AG04450 (cell line): ENCODE measurements at regions of chr5 and their contacts with region 1.

Region 1: GRCh38 chr5:138449501-138450239 is 10.8 kb downstream of the REEP2 start:
- DNase-seq: peak; percentile 59
- H3K4me3 ChIP-seq: peak overlapping the region; percentile 13; the same call in 1 of the 2 replicates
- H3K27ac ChIP-seq: no peak overlapping the region
- H3K27me3 ChIP-seq: no peaks in the 10 kb centered on the region
- CTCF ChIP-seq: peak; percentile 93

Region 2: DNA sequence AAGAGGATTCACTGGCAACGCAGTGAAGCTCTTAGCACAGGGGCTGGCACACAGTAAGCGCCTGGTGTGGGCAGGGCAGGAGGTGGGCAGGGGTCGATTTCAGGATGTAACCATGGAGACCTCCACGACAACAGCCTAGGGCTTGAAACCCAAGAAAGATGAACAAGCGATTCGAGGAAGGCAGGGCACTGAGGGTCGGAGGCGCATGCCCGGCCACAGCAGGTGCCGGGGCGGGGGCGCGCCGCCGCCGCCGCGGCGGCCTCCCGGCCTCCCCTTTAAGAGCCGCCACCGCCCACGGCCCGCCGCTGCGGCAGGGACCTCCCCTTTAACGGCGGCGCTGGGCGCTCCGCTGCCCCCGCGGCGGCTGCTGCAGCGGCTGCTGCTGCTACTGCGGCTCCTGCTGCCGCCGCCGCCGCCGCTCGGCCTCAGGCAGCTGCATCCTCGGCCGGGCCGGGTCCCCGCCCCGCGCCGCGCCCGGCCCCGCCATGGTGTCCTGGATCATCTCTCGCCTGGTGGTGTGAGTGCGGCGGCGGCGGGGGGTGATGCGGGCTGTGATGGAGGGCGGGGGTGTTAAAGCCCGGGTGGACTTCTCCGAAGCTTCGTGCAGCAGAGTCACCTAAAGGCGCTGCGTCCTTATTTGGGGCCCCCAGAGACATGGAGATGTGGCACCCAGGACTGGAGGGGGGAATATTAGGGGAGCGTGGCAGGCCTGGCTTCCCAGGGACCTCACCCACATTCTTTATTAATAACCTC is 10.8 kb before region 1 on chr5 and contains the start of gene REEP2:
- CTCF ChIA-PET with region 1: interaction called, 23 read pairs
- POLR2A ChIA-PET with region 1: interaction called, 3 read pairs
- DNase-seq: no peak
- H3K4me3 ChIP-seq: peak within 1 kb of the TSS; percentile 74
- H3K27ac ChIP-seq: no peak within 1 kb of the TSS
- H3K27me3 ChIP-seq: no peaks in the 10 kb centered on the region
- CTCF ChIP-seq: no peak
- polyA plus RNA-seq, gene REEP2: 24.7 and 36.9 TPM in 2 replicates

Region 3: GRCh38 chr5:138464008-138464387 is 14.3 kb after region 1 on chr5:
- CTCF ChIA-PET with region 1: interaction called, 28 read pairs
- POLR2A ChIA-PET with region 1: interaction called, 13 read pairs
- DNase-seq: peak; percentile 93
- H3K4me3 ChIP-seq: peak overlapping the region; percentile 94
- H3K27ac ChIP-seq: peak overlapping the region; percentile 96
- H3K27me3 ChIP-seq: no peaks in the 10 kb centered on the region
- CTCF ChIP-seq: peak; percentile 74

Region 4: DNA sequence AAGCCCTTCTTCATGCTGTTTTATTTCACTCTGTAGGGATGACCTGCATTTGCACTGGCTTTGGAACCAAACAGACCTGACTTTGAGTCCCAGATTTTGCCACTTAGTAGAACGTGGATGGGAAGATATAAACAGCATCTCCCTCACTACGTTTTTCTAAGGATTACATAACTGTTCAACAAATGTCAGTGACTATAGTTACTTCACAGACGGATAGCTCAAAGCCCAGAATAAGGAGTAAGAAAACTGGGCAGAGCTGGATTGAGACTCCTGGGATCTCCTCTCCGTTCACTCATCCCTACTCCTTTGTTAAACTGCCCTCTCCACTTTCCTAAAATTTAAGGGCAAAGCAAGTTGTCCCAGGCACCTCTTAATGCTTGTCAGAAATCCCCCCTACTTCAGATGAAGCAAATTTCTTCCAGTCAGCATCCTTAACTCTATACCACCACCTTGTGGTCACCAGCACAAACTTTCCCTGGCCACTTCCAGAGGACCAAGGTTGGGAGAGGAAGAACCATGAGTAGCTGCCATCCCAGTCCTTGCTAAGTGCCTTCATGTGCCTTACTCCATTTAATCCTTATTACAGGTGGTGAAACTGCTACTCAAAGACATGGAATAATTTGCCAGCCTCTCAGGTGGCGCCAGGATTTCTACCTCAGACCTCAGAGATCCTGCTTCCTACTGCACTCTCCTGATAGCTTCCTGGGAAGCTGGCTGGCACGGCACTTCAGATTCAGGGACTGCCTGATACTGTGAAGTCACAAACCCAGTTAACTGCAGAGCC is 54.0 kb after region 1 on chr5:
- CTCF ChIA-PET with region 1: interaction called, 86 read pairs
- POLR2A ChIA-PET with region 1: interaction called, 4 read pairs
- DNase-seq: peak; percentile 46
- H3K4me3 ChIP-seq: no peak overlapping the region
- H3K27ac ChIP-seq: peak overlapping the region; percentile 21
- H3K27me3 ChIP-seq: no peaks in the 10 kb centered on the region
- CTCF ChIP-seq: peak; percentile 88

Region 5: GRCh38 chr5:138515556-138516245 is 66.0 kb after region 1 on chr5:
- CTCF ChIA-PET with region 1: interaction called, 15 read pairs
- POLR2A ChIA-PET with region 1: no interaction called
- DNase-seq: no peak
- H3K4me3 ChIP-seq: no peak overlapping the region
- H3K27ac ChIP-seq: no peak overlapping the region
- H3K27me3 ChIP-seq: no peaks in the 10 kb centered on the region
- CTCF ChIP-seq: no peak

Region 6: DNA sequence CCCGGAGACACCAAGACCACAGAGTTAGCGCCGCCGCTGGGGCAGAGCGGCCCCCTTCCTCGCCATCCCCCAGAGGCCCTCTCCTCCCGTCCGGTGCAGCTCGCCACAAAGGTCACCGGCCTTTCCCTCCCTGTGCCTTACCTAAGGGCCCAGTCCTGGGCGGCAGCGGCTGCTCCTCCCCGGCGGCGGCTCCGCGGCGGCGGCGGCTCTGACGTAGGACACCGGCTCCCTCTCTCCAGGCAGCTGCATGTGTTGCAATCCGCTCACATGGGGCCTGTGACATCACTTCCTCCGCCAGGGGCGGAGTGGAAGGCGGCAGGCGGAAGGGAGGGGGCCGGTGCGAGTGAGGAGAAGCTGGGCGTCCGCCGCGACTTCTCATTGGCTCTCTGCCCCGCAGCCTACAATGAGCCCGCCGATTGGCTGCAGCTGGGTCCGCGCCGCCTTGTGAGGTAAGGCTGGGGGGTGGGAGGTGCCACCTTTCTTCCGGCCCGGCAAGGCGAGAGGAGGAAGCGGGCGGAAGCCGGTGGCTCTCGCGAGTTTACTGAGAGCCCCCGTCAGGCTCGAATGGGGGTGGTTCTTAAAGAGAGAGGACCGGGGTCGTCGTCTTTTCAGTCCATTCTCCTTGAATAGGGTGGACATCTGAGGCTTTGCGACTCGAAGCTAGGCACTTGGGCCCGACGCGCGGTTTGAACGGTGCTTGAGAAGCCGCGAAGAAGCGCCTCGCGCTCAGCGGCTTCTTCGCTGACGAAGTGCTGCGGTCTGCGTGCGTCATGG is 93.5 kb after region 1 on chr5 and contains the start of gene ETF1:
- CTCF ChIA-PET with region 1: interaction called, 36 read pairs
- POLR2A ChIA-PET with region 1: interaction called, 7 read pairs
- DNase-seq: peak; percentile 99
- H3K4me3 ChIP-seq: peak within 1 kb of the TSS; percentile 94
- H3K27ac ChIP-seq: peak within 1 kb of the TSS; percentile 100
- H3K27me3 ChIP-seq: no peaks in the 10 kb centered on the region
- CTCF ChIP-seq: no peak
- polyA plus RNA-seq, gene ETF1: 85.3 and 107 TPM in 2 replicates